T-cell (primary cell): ENCODE measurements at regions of chr6 and their contacts with region 1.

Region 1: DNA sequence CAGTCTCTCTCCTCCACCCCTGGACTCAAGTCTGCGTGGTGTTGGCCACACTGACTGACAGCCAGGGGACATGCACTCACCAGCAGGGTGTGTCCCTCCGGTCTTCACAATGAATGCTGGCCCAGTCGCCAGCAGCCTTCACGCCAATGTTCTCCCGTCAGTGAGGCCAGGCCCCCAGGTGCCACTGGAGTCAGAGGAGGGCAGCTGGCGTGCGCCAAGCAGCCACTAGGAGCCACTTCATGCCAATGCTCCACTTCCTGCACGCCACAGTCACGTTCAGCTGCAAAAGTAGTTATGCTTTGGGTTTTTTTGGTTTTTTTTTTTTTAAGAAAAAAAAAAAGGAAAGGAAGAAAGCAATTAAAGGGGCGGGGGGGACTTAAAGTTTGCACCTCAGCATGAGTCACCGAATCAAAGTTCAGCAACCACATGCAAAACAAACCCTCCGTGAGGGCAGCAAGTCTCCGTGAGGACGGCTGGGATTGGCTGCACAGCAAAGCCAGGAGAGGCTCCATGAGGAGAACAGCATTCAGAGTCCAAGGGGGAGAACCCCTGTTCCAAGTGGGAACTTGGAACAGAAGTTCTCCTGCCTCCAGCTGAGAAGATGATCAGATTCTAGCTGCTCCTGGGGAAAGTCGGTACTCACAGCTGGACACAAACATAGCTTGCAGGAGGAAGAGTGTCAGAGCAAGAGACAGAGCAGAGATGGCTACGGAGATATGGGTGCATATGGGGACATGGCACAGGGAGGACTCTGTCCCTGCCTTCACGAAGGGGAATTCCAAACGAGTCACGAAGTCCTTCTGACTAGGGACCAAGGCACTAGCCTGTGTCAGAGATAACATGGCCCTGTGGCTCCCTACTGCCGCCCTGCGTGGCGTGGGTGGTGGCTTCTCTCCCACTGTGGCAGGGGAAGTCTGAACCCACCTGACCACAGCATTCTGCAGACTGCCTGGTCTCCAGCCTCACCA is at the start of gene ZC3H12D:
- DNase-seq: peak; percentile 60 to 92 (median 79)
- ATAC-seq: peak; percentile 77 to 83 (median 79)
- H3K4me3 ChIP-seq: peak within 1 kb of the TSS; percentile 25 to 65
- H3K4me3 Mint-ChIP-seq: peak within 1 kb of the TSS; percentile 85 to 92 (median 91)
- H3K27ac ChIP-seq: peak within 1 kb of the TSS; percentile 98
- H3K27ac Mint-ChIP-seq: peak within 1 kb of the TSS; percentile 99
- H3K4me1 ChIP-seq: peaks cover 15 to 53% of the 10 kb centered on the region in 2 experiments
- H3K4me1 Mint-ChIP-seq: peaks cover 55 to 60% (median 58%) of the 10 kb centered on the region in 3 donors
- H3K27me3 ChIP-seq: no peaks in the 10 kb centered on the region
- H3K27me3 Mint-ChIP-seq: no peaks in the 10 kb centered on the region
- total RNA-seq, gene ZC3H12D: 48.2 to 117 (median 107) TPM

Region 2: DNA sequence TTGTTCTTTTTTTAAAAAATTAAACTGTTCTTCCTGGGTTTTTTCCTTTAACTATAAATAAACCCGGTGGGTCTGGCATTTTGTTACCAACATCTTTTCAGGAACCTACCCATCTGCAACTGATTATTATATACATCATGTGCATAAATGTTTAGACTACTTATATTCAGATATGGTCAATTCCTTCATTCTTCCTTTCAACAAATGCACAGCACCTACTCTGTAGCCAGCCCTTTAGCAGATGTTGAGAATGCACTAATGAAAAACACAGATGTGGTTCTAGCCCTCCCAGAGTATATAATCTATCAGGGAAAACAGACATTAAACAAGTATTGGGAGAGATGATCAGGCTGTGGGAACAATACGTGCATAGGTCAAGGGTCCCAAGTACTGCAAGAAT is 501.1 kb before region 1 on chr6:
- CTCF ChIA-PET with region 1: no interaction called
- POLR2A ChIA-PET with region 1: interaction called in 1 of 2 experiments, 13 read pairs
- DNase-seq: no peak
- ATAC-seq: no peak
- H3K4me3 ChIP-seq: no peak overlapping the region
- H3K4me3 Mint-ChIP-seq: no peak overlapping the region
- H3K27ac ChIP-seq: no peak overlapping the region
- H3K27ac Mint-ChIP-seq: no peak overlapping the region
- H3K4me1 ChIP-seq: no peaks in the 10 kb centered on the region
- H3K4me1 Mint-ChIP-seq: peaks cover 0 to 6% (median 0%) of the 10 kb centered on the region in 3 donors
- H3K27me3 ChIP-seq: no peaks in the 10 kb centered on the region
- H3K27me3 Mint-ChIP-seq: peaks cover 4% of the 10 kb centered on the region in 2 donors

Region 3: DNA sequence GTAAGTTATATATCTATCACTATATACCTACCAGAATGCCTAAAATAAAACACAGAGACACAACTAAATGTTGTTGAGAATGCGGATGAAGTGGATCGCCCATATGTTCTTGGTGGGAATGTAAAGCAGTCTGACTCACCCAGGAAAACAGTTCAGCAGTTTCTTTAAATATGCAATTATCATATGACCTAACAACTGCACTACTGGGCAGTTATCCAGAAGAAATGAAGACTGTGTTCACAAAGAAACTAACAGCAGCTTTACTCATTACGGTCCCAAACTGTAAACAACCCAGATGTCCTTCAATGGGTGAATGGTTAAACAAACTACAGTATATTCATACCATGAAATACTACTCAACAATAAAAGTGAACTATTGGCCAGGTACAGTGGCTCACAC is 14.0 kb after region 1 on chr6:
- CTCF ChIA-PET with region 1: interaction called, 5 to 23 read pairs
- POLR2A ChIA-PET with region 1: interaction called, 14 to 26 read pairs
- DNase-seq: no peak
- ATAC-seq: no peak
- H3K4me3 ChIP-seq: no peak overlapping the region
- H3K4me3 Mint-ChIP-seq: no peak overlapping the region
- H3K27ac ChIP-seq: peak overlapping the region; percentile 17
- H3K27ac Mint-ChIP-seq: peak overlapping the region; percentile 63 to 87
- H3K4me1 ChIP-seq: peaks cover 15 to 31% of the 10 kb centered on the region in 2 experiments
- H3K4me1 Mint-ChIP-seq: peaks cover 56 to 73% (median 73%) of the 10 kb centered on the region in 3 donors
- H3K27me3 ChIP-seq: no peaks in the 10 kb centered on the region
- H3K27me3 Mint-ChIP-seq: no peaks in the 10 kb centered on the region

Region 4: DNA sequence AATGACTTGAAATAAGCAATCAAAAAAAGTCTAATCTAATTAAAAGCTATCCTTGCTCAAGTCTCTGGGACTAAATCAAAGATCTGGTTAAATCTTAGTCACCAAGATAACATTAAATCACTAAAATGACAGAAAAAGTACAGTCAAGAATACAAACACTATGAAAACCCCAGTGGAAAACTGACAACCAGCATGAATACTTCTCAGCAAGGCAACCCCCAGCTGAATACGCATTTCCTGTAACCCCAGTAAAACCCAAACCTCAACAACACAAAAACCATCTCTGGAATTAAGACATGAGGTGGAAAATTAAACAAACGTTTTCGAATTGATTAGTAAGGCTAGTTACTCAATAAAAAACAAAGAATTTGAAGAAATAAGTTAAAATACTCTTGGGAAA is 23.5 kb after region 1 on chr6:
- CTCF ChIA-PET with region 1: interaction called, 7 to 9 read pairs
- POLR2A ChIA-PET with region 1: interaction called, 4 to 42 read pairs
- DNase-seq: peak in 26 of 35 experiments; percentile 8 to 81 (median 45)
- ATAC-seq: peak; percentile 76 to 95 (median 86)
- H3K4me3 ChIP-seq: no peak overlapping the region
- H3K4me3 Mint-ChIP-seq: peak overlapping the region; percentile 7 to 53 (median 32)
- H3K27ac ChIP-seq: peak overlapping the region; percentile 74
- H3K27ac Mint-ChIP-seq: peak overlapping the region; percentile 91 to 95
- H3K4me1 ChIP-seq: peaks cover 0 to 4% of the 10 kb centered on the region in 2 experiments
- H3K4me1 Mint-ChIP-seq: peaks cover 37 to 54% (median 44%) of the 10 kb centered on the region in 3 donors
- H3K27me3 ChIP-seq: no peaks in the 10 kb centered on the region
- H3K27me3 Mint-ChIP-seq: no peaks in the 10 kb centered on the region

Region 5: DNA sequence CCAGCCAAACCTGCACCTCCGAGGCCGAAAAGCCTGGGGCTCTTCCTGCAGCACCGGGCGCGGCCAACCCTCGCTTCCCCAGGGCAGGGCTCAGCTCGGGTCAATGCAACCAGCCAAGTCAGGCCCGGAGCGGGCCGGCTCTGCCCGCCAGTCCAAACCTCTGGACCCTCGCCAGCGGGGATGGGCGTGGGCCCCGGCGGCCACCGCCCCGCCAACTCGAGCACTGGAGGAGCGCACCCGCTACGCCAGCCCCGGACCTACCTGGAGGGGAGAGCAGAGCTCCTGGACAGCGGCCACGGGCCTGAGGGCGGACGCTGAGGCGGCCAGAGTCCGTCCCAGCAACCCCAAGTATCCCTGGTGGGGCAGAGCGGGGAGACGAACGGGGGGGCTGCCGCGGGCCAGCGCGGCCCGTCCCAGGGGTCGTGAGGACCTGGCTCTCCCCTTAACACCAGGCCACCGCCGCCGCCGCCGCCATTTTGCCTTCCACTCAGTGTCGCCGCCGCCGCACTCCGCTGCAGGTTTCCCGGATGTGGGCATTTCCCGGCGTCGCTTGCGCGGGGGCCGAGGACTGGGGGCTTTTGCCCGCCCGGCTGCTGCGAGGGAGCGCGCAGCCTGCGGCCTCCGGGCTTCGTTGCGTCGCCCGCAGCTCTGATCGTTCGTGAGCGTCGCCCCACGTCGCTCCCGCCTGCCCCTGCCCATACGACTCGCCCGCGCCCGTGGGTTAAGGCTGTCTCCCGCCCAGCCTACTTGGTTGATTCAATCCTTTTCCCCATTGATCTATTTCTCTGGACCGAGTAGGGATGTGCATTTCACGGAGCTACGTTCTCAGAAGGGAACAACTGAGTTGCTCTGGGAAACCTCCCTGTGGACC is 232.8 kb after region 1 on chr6 and contains the start of gene LATS1:
- CTCF ChIA-PET with region 1: interaction called in 1 of 2 experiments, 16 read pairs
- POLR2A ChIA-PET with region 1: no interaction called
- DNase-seq: peak; percentile 79 to 96 (median 90)
- ATAC-seq: peak; percentile 93 to 96 (median 94)
- H3K4me3 ChIP-seq: peak within 1 kb of the TSS; percentile 77 to 88
- H3K4me3 Mint-ChIP-seq: peak within 1 kb of the TSS; percentile 94 to 97 (median 96)
- H3K27ac ChIP-seq: peak within 1 kb of the TSS; percentile 84
- H3K27ac Mint-ChIP-seq: peak within 1 kb of the TSS; percentile 97 to 98
- H3K4me1 ChIP-seq: peaks cover 16 to 19% of the 10 kb centered on the region in 2 experiments
- H3K4me1 Mint-ChIP-seq: peaks cover 40 to 52% (median 41%) of the 10 kb centered on the region in 3 donors
- H3K27me3 ChIP-seq: no peaks in the 10 kb centered on the region
- H3K27me3 Mint-ChIP-seq: no peaks in the 10 kb centered on the region
- total RNA-seq, gene LATS1: 38.0 to 43.3 (median 39.2) TPM